Esophagus squamous epithelium (tissue), 5 donors: ENCODE measurements at regions of chr14 and their contacts with region 1.

Region 1: DNA sequence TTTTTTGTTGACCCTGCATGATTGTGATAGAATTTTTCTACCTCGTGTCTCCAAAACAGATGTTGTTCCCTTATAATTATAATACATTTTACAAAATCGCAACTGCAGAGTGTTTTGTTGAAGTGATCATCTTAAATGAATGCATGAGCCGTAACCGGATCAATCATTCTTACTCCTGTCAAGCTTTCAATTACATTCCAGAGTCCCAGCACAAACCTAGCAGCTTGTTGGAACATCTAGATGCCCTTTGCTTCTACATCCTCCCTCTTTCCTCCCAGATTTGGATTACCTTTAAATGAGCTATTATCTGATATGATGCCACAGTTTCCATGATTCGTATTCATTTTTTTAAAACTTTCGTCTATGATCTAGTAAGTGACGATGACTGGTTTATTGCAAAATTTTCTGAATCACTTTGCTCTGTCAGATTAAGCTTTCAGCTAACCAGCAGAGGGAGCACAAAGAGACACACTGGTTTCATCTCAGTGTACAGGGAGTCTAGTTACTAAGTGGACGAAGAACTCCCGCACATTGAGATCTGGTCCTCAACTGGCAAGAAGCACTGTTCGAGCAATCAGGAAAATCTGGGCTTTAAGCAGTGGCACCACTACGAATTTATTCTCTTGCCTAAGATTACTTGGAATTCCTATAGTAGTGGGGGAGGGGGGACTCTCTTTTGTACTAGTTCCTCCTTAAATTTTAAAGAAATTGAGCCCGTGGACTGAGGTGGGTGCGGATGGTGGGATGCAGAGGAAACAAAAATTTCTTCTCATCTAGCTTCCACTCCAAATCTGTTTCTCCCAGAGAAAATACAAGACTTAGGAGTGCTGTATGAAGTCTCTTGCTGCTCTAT is 40.9 kb downstream of the TSHR start:
- DNase-seq: no peak
- H3K4me3 ChIP-seq: no peak overlapping the region
- H3K27ac ChIP-seq: no peak overlapping the region
- H3K4me1 ChIP-seq: peaks cover 0 to 9% (median 0%) of the 10 kb centered on the region in 3 donors
- H3K27me3 ChIP-seq: peaks cover 0 to 9% (median 0%) of the 10 kb centered on the region in 4 donors
- CTCF ChIP-seq: peak; percentile 17 to 77 (median 62)
- POLR2A ChIP-seq: no peak

Region 2: DNA sequence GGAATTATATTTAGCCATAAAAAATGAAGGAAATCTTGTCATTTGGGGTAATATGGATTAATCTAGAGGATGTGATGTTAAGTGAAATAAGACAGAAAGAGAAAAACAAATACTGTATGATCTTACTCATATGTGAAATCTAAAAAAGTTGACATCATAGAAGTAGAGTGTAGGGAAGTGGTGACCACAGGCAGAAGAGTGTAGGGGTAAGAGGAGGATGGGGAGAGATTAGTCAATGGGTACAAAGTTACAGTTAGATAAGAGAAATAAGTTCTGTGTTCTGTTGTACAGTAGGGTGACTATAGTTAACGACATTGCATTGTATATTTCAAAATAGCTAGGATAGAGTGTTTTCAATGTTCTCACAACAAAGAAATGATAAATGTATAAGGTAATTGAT is 46.2 kb after region 1 on chr14:
- intact Hi-C with region 1: no loop called
- DNase-seq: no peak
- H3K4me3 ChIP-seq: no peak overlapping the region
- H3K27ac ChIP-seq: no peak overlapping the region
- H3K4me1 ChIP-seq: no peaks in the 10 kb centered on the region
- H3K27me3 ChIP-seq: no peaks in the 10 kb centered on the region
- CTCF ChIP-seq: no peak
- POLR2A ChIP-seq: no peak

Region 3: DNA sequence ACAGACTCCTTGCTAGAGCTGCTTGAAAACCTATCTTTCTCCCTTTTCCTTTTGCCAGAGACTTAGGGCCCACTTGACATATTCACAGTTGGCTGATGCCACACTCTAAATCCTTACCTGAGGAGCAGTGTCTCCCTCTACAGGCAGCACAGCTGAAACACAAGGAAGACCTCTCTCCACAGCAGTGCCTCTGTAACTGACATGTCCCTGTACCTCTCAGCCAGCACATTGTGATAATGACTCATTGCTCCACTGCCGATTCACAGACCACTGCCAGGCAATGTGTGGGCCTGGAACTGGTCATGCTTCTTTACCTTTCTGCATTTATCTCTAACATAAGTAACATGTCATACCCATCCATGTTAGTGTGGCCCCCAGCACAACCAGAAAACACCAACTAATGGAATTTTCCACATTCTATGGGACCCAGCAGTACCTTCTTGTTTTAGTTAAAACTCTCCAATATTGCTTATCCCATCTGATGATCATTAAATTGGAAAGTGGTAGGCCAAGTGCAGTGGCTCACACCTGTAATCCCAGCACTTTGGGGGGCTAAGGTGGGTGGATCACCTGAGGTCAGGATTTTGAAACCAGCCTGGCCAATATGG is 168.0 kb after region 1 on chr14:
- intact Hi-C with region 1: loop called (anchors 10 kb)
- DNase-seq: no peak
- H3K4me3 ChIP-seq: no peak overlapping the region
- H3K27ac ChIP-seq: no peak overlapping the region
- H3K4me1 ChIP-seq: peaks cover 0 to 4% (median 0%) of the 10 kb centered on the region in 3 donors
- H3K27me3 ChIP-seq: no peaks in the 10 kb centered on the region
- CTCF ChIP-seq: peak in 5 of 6 experiments; percentile 23 to 65 (median 45)
- POLR2A ChIP-seq: no peak

Region 4: GRCh38 chr14:81464247-81465002 is 468.1 kb after region 1 on chr14:
- intact Hi-C with region 1: loop called (anchors 5 kb)
- DNase-seq: no peak
- H3K4me3 ChIP-seq: peak overlapping the region in 3 of 4 donors; percentile 40 to 59 (median 44)
- H3K27ac ChIP-seq: peak overlapping the region in 2 of 4 donors; percentile 59 to 68
- H3K4me1 ChIP-seq: peaks cover 0 to 24% (median 0%) of the 10 kb centered on the region in 3 donors
- H3K27me3 ChIP-seq: no peaks in the 10 kb centered on the region
- CTCF ChIP-seq: peak; percentile 89 to 95 (median 90)
- POLR2A ChIP-seq: no peak